ENCODE measurements at regions of chr17 and their contacts with region 1.

Region 1: GRCh38 chr17:42577532-42578281 is at the start of gene PSMC3IP:
- DNase-seq: peak; percentile 87
- ATAC-seq: peak; percentile 86
- H3K4me3 ChIP-seq: peak within 1 kb of the TSS; percentile 72 to 99
- H3K27ac ChIP-seq: peak within 1 kb of the TSS; percentile 95
- H3K4me1 ChIP-seq: peaks cover 10 to 15% of the 10 kb centered on the region in 2 experiments
- H3K27me3 ChIP-seq: no peaks in the 10 kb centered on the region
- CTCF ChIP-seq: peak in 2 of 3 experiments; percentile 23 to 42; a peak in 2 of 6 replicates
- POLR2A ChIP-seq: peak; percentile 87
- RAD21 ChIP-seq: no peak
- total RNA-seq, gene PSMC3IP: 24.3 TPM

Region 2: GRCh38 chr17:42598905-42599304 is 21.2 kb after region 1 on chr17:
- CTCF ChIA-PET with region 1: interaction called, 17 read pairs
- POLR2A ChIA-PET with region 1: interaction called, 4 read pairs
- RAD21 ChIA-PET with region 1: no interaction called
- intact Hi-C with region 1: no loop called
- DNase-seq: no peak
- ATAC-seq: no peak
- H3K4me3 ChIP-seq: no peak overlapping the region
- H3K27ac ChIP-seq: no peak overlapping the region
- H3K4me1 ChIP-seq: no peaks in the 10 kb centered on the region
- H3K27me3 ChIP-seq: no peaks in the 10 kb centered on the region
- CTCF ChIP-seq: no peak
- POLR2A ChIP-seq: no peak
- RAD21 ChIP-seq: no peak

Region 3: DNA sequence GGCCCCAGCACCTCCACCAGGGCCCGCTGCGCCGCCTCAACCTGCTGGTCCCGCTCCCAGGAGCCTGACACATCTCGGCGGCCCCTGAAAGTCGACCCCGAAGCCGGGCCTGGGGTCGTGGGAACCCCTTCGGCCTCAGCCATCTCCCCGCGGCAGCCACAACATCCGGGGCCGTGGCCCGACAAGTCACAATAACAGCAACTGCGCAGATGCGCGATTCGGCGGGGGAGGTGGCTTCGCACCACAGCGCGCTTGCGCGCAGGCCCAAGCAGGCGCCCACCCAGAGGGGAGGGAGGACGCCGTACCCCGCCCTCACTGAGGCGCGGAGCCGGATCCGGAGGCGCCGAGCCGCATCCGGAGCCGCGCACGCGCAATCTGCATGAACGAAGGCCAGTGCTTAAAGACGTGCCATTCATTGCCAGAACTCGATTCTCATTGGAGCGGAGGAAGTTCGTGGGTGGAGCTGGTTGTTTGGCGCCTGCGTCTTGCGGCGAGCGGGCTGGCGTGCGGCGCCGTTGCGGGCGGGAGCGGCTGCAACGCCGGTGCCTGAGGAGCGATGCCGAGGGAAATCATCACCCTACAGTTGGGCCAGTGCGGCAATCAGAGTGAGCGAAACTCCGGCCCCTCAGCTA is 31.6 kb after region 1 on chr17 and contains the starts of genes RETREG3 and TUBG1:
- CTCF ChIA-PET with region 1: interaction called, 10 read pairs
- POLR2A ChIA-PET with region 1: interaction called, 3 read pairs
- RAD21 ChIA-PET with region 1: interaction called in 1 of 2 experiments, 3 read pairs
- intact Hi-C with region 1: no loop called
- DNase-seq: peak; percentile 98
- ATAC-seq: peak; percentile 91
- H3K4me3 ChIP-seq: peak within 1 kb of the TSS; percentile 85 to 94
- H3K27ac ChIP-seq: peak within 1 kb of the TSS; percentile 82
- H3K4me1 ChIP-seq: peaks cover 0 to 12% of the 10 kb centered on the region in 2 experiments; a peak in 3 of 4 replicates
- H3K27me3 ChIP-seq: no peaks in the 10 kb centered on the region
- CTCF ChIP-seq: no peak
- POLR2A ChIP-seq: peak; percentile 76
- RAD21 ChIP-seq: no peak
- total RNA-seq, gene RETREG3: 38.5 TPM
- total RNA-seq, gene TUBG1: 139 TPM

Region 4: GRCh38 chr17:42677008-42677857 is 99.5 kb after region 1 on chr17:
- CTCF ChIA-PET with region 1: interaction called, 136 read pairs
- POLR2A ChIA-PET with region 1: interaction called, 13 read pairs
- RAD21 ChIA-PET with region 1: interaction called, 9 to 25 read pairs
- intact Hi-C with region 1: loop called (anchors 1 kb)
- DNase-seq: peak; percentile 99
- ATAC-seq: peak; percentile 71
- H3K4me3 ChIP-seq: peak overlapping the region; percentile 95 to 98
- H3K27ac ChIP-seq: peak overlapping the region; percentile 96
- H3K4me1 ChIP-seq: peaks cover 37 to 72% of the 10 kb centered on the region in 2 experiments
- H3K27me3 ChIP-seq: no peaks in the 10 kb centered on the region
- CTCF ChIP-seq: no peak
- POLR2A ChIP-seq: no peak
- RAD21 ChIP-seq: no peak

Region 5: GRCh38 chr17:42760652-42761581 is 183.2 kb after region 1 on chr17 and contains the start of gene RAMP2:
- CTCF ChIA-PET with region 1: interaction called, 72 read pairs
- POLR2A ChIA-PET with region 1: interaction called, 11 read pairs
- RAD21 ChIA-PET with region 1: interaction called, 6 to 22 read pairs
- intact Hi-C with region 1: loop called (anchors 1 kb)
- DNase-seq: no peak
- ATAC-seq: no peak
- H3K4me3 ChIP-seq: no peak within 1 kb of the TSS
- H3K27ac ChIP-seq: no peak within 1 kb of the TSS
- H3K4me1 ChIP-seq: peaks cover 0 to 8% of the 10 kb centered on the region in 2 experiments; a peak in 3 of 4 replicates
- H3K27me3 ChIP-seq: no peaks in the 10 kb centered on the region
- CTCF ChIP-seq: no peak
- POLR2A ChIP-seq: no peak
- RAD21 ChIP-seq: no peak
- total RNA-seq, gene RAMP2: not detected

Region 6: DNA sequence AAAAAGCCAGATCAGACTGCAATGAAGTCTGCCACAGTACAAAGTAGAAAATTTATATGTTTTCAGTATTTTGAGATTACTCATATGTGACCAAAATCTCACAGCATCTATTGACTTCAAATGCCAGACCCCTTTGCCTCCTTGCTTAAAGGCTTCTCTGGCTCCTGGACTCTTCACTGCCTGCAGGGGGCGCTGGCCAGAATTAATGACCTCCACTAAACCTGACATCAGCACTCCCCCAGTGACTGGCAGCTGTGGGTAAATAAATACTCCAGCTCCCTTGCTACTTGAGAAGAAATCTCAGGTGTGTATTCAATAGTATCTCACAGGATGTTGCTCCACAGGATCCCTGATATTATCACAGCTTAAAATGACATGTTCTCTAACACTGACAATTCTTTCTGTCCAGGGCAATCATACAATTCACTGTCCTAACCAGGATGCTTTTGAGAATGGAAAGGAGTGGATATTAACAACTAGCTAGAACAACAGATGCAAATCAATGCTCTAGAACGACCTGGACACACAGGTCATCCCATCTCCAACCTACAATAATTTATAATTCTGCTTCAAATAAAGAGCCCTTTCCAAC is 242.3 kb after region 1 on chr17:
- CTCF ChIA-PET with region 1: interaction called, 5 read pairs
- POLR2A ChIA-PET with region 1: no interaction called
- RAD21 ChIA-PET with region 1: interaction called in 1 of 2 experiments, 3 read pairs
- intact Hi-C with region 1: loop called (anchors 1 kb)
- DNase-seq: peak; percentile 21
- ATAC-seq: no peak
- H3K4me3 ChIP-seq: no peak overlapping the region
- H3K27ac ChIP-seq: no peak overlapping the region
- H3K4me1 ChIP-seq: peaks cover 2 to 16% of the 10 kb centered on the region in 2 experiments; a peak in 2 of 4 replicates
- H3K27me3 ChIP-seq: no peaks in the 10 kb centered on the region
- CTCF ChIP-seq: peak; percentile 26 to 74 (median 68); a peak in 4 of 6 replicates
- POLR2A ChIP-seq: no peak
- RAD21 ChIP-seq: peak; percentile 27; the same call in 1 of the 2 replicates

Region 7: GRCh38 chr17:42937712-42938596 is 360.2 kb after region 1 on chr17:
- CTCF ChIA-PET with region 1: no interaction called
- POLR2A ChIA-PET with region 1: no interaction called
- RAD21 ChIA-PET with region 1: no interaction called
- intact Hi-C with region 1: loop called (anchors 1 kb)
- DNase-seq: peak; percentile 51
- ATAC-seq: peak; percentile 89
- H3K4me3 ChIP-seq: no peak overlapping the region
- H3K27ac ChIP-seq: no peak overlapping the region
- H3K4me1 ChIP-seq: no peaks in the 10 kb centered on the region; a peak in 1 of 4 replicates
- H3K27me3 ChIP-seq: no peaks in the 10 kb centered on the region; the same call in 1 of the 2 replicates
- CTCF ChIP-seq: peak; percentile 69 to 87 (median 76)
- POLR2A ChIP-seq: no peak
- RAD21 ChIP-seq: peak; percentile 93